ENCODE measurements at regions of chr1 and their contacts with region 1.

Region 1: GRCh38 chr1:145927063-145927886 is at the start of gene RBM8A:
- DNase-seq: peak; percentile 92

Region 2: GRCh38 chr1:145795257-145795881 is 131.9 kb before region 1 on chr1:
- CTCF ChIA-PET with region 1: no interaction called
- POLR2A ChIA-PET with region 1: no interaction called
- DNase-seq: no peak

Region 3: DNA sequence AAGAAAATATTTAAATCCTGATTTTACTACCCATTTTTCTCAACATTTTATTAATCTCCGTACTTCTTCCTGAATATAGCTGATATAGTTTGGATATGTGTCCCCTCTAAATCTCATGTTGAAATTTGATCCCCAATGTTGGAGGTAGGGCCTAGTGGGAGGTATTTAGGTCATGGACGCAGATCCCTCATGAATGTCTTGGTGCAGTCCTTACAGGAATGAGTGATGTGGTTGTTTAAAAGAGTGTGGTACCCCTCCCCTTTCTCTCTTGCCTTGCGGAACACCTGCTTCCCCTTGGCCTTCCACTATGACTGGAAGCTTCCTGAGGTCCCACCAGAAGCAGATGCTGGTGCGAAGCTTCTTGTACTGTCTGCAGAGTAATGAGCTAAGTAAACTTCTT is 120.9 kb before region 1 on chr1:
- CTCF ChIA-PET with region 1: no interaction called
- POLR2A ChIA-PET with region 1: no interaction called
- DNase-seq: no peak

Region 4: DNA sequence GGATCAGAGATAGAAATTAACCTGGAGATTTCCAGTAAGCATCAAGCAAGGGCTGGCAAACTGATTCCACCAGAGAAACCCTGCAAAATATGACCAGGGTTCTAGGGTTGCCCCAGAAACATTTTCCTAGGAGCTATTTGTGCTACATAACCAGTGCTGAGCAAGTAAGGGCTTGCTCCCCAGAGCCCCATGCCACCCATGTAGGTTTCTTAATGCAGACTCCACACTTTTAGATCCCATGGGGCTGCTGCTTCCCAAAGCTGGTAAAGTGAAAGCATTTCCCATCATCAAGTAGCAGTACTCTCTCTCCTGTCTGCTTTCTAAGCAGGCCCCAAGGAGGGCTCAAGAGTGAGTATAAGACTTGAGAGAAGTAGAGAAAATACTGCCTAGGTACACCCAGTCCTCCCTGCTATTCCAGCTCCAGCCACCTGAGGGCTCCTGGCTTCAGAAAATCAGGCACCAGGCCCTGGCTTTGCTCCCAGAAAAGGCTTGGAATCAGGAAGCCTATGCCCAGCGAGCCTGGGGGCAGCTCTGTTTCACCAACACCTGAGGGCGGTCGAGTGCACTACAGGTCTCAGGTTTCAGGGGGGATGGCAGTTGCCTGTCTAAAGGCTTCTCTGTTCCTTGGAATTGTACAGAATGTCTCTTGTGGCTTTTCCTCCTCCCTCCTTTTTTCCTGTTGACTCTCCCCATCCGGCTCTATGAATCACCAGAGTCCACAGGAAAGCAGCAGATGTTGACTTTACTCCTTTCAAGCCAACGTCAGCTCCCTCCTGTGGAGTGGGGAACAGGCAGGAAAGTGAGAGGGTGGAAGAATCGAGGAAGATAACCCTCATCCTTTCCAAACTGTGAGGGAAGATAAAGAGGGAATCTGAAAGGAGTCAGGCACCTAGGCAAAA is 35.4 kb before region 1 on chr1:
- CTCF ChIA-PET with region 1: interaction called, 4 read pairs
- POLR2A ChIA-PET with region 1: interaction called, 23 read pairs
- DNase-seq: peak; percentile 95

Region 5: DNA sequence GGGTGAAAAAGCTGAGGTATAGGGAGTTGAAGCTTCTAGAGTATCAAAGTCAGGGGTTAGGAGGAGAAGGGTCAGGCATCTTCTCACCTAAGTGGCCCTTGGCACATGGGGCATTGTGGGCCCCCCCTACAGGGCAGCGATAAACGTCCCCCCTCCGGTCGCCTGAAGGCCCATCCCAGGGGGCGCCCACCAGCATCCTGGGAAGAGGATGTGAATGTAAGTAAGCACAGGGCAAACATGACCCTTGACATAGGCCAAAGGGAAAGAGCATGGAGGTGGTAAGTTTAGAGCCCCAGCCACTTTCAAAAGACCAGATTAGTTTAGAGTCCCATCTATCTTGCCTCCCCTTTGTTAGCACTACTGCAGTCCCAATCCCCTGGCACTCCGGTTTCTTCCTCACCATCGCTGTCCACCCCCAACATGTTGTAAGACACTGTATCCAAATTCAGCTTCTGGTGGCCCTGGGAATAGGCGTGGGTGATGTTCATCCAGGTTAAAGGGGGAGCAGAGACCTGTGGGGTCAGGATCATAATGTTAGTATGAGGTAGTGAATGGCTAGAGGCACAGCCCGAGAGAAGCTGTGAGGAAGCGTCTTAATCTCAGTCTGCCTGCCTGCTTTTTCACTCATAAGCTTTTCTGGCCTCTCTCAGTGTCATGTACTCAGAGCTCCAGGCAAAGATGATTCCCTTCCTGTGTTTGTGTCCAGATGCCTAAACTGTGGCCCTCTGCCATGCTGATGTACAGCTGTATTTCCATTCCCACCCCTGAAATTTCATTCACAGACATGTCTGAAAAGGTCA is 20.1 kb before region 1 on chr1:
- CTCF ChIA-PET with region 1: interaction called, 3 read pairs
- POLR2A ChIA-PET with region 1: interaction called, 11 read pairs
- DNase-seq: no peak

Region 6: DNA sequence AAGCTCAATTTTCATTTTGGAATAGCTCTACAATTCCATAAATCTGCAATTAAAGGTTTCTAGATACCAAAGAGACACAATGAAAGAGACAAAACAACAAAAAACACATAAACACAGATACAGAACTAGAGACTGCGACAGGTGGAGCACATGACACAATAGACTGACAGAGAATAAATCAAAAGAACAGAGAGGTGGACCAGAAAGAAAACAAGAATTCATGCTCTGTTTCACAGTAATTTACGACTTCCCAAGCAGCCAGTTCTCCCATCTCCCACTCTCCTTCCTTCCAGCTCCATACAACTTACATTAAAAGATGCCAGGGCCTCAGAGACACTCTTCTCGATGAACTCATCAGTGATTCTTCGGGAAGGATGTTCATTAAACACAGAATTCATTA is 15.1 kb after region 1 on chr1:
- CTCF ChIA-PET with region 1: interaction called, 4 read pairs
- POLR2A ChIA-PET with region 1: interaction called, 20 read pairs
- DNase-seq: no peak

Region 7: DNA sequence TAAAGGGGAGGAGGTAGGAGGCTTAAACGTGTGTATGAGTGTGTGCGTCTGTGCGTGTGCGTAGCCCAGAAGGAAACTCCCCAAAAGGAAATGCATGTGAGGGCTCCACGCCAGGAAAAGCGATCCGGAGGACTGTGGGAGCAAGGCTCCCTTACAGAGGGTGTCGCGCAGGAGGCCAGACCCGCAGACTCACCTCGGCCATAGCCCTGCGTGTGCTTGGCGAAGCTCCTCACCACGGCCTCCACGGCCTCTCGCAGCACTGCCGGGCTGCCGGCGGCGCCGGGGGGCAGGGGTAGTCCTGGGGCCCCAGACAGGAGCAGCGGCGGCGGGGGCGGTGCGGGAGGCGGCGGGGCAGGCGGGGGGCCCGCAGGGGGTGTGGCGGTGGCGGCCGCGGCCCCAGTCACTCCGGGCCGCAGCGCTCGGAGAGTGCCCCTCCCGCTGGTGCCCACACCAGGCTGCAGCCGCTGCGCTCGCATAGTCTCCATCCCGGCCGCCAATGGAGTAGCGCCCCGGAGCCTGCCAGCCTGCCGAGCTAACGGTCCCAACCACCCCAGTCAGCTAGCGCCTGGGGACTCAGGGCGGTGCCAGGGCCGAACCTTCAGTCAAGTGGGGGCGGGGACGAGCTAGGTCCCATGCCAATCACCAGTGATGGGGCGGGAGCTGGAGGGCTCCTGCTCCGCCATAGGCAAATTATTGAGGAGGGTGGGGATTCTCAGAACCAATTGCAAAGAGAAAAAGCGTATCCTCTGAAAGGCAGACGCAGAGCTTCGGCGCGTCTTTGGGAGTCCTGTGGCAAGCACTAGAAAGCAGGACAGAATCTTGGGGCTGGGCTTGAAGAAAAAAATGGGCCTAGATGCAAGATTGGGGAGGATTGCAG is 30.4 kb after region 1 on chr1 and contains the start of gene LIX1L:
- CTCF ChIA-PET with region 1: interaction called, 6 read pairs
- POLR2A ChIA-PET with region 1: interaction called, 90 read pairs
- DNase-seq: peak; percentile 95

Region 8: GRCh38 chr1:145978854-145979759 is 51.8 kb after region 1 on chr1:
- CTCF ChIA-PET with region 1: interaction called, 3 read pairs
- POLR2A ChIA-PET with region 1: interaction called, 17 read pairs
- DNase-seq: peak; percentile 90

Region 9: DNA sequence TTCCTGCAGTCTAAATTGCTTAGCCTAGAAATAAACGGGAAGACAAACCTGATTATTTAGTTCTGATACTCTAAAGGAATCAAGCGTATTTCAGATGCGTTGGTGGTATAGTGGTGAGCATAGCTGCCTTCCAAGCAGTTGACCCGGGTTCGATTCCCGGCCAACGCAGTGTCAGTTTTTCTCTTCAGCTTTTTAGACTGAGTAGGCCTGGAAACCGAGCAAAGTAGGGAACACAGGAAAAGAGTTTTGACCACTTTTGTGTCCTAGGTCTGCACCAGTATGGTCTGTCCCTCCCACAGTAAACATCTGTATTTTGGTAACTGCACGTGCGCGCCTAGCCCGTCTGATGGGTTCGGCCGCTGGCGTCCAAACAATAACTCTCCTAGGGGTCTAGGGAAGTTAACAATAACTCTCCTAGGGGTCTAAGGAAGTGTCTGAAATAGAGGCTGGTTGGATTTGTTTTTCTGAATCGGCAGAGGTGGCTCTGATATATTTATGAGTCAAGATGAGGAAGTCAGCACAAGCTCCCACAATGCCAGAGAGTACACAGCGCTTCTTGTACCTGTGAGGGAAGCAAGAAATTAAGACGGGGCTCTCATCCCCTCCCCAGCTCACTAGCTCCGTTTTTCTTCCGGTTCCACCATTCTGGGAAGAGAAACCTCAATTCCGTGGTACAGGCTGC is 109.8 kb after region 1 on chr1:
- CTCF ChIA-PET with region 1: interaction called, 3 read pairs
- POLR2A ChIA-PET with region 1: interaction called, 25 read pairs
- DNase-seq: peak; percentile 47